ENCODE measurements at regions of chr7 and their contacts with region 1.

Region 1: GRCh38 chr7:38409531-38409930 is 136.1 kb upstream of the TARP start:
- DNase-seq: no peak
- ATAC-seq: no peak

Region 2: DNA sequence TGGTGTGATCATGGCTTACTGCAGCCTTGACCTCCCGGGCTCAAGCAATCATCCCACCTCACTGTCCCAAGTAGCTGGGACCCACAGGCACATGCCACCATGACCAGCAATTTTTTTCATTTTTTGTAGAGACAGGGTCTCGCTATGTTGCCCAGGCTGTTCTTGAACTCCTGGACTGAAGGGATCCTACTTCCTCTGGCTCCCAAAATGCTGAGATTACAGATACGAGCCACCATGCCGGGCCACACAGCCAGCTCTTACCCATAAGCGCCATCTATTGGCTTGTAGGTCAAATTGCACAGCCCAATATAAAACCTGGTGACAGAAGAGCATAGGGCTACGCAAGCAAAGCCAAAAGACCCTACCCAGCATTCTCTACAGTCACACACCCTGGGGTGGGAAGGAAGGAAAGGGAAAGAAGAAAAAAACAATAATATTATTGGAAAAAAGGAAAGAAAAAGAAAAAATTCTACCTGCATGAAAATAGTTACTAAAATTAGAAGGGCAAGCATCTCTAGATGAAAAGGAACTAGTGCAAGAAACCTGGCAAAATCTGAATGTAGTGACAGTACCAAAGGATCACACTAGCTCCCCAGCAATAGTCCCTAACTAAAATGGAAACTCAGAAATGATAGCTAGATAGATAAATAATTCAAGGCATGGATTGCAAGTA is 251.0 kb after region 1 on chr7:
- intact Hi-C with region 1: loop called in 1 of 2 experiments (anchors 10 kb)
- DNase-seq: peak in 1 of 2 donors; percentile 11
- ATAC-seq: peak; percentile 62